AG04449 (cell line): ENCODE measurements at regions of chr5 and their contacts with region 1.

Region 1: GRCh38 chr5:15995341-15996052 is 184.1 kb downstream of the MARCHF11 start:
- DNase-seq: no peak
- H3K4me3 ChIP-seq: no peak overlapping the region
- CTCF ChIP-seq: peak; percentile 45

Region 2: GRCh38 chr5:15105796-15106393 is 889.6 kb before region 1 on chr5:
- CTCF ChIA-PET with region 1: interaction called, 78 read pairs
- POLR2A ChIA-PET with region 1: no interaction called
- DNase-seq: no peak
- H3K4me3 ChIP-seq: no peak overlapping the region
- CTCF ChIP-seq: peak; percentile 75

Region 3: GRCh38 chr5:15463231-15463980 is 532.1 kb before region 1 on chr5:
- CTCF ChIA-PET with region 1: interaction called, 69 read pairs
- POLR2A ChIA-PET with region 1: no interaction called
- DNase-seq: no peak
- H3K4me3 ChIP-seq: no peak overlapping the region
- CTCF ChIP-seq: peak; percentile 27

Region 4: DNA sequence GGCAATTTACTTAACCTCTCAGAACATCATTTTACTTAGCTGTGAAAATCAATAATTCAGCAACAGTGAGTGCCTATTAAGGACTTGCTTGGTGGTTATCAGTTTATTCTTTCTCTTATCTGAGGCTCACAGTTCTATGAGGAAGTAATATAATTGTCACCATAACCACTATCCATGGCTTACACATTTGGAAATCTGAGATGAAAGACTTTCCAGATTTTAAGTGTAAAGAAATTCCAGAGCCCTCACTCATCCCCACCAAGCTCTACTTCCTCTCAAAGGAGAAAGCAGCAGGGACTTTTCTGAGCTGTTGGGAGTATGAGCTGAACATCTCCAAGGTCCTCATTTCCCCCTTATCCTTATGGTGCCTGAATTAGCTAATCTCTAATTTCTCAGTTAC is 174.0 kb before region 1 on chr5:
- CTCF ChIA-PET with region 1: interaction called, 22 read pairs
- POLR2A ChIA-PET with region 1: no interaction called
- DNase-seq: peak; percentile 17
- H3K4me3 ChIP-seq: no peak overlapping the region
- CTCF ChIP-seq: no peak

Region 5: GRCh38 chr5:15948190-15948589 is 47.3 kb before region 1 on chr5:
- CTCF ChIA-PET with region 1: no interaction called
- POLR2A ChIA-PET with region 1: no interaction called
- DNase-seq: no peak
- H3K4me3 ChIP-seq: no peak overlapping the region
- CTCF ChIP-seq: no peak

Region 6: DNA sequence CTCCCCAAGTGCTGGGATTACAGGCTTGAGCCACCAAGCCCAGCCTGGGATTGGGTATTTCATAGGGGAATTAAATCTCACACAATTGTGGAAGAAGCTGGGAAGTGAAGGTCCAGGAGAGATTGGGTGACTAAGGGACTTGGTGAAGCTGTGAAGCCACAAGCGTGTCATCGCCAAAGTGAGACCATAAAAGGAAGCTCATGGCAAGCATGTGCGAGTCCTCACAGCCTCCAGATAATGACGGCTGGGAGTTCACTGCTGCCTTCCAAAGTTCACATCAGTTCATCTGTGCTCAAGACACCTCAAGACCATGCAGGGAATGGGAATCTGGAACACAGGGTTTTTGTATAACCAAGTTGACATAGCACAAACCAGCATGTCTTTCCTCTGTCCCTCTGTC is 26.5 kb before region 1 on chr5:
- CTCF ChIA-PET with region 1: interaction called, 22 read pairs
- POLR2A ChIA-PET with region 1: no interaction called
- DNase-seq: no peak
- H3K4me3 ChIP-seq: no peak overlapping the region
- CTCF ChIP-seq: no peak

Region 7: DNA sequence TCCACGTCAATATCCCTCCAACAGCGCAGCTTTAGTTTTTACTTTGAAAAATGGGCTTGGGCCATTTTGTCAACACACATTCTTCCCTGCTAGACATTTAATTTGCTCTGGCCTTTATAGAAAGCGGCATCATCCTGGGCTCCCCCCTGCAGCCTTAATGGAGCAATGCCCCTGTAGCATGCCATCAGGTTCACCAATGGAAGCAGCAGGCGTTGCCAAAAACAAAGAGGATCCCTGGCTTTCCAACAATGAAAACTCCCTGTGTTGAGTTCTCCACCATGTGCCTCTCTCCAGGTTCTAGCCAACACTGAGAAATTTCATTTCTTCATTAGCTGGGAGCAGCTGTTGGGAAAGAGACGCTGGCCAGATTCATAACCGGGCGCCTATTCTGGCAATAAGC is 330.6 kb after region 1 on chr5:
- CTCF ChIA-PET with region 1: no interaction called
- POLR2A ChIA-PET with region 1: no interaction called
- DNase-seq: no peak
- H3K4me3 ChIP-seq: no peak overlapping the region
- CTCF ChIP-seq: no peak